ENCODE measurements at regions of chr11 and their contacts with region 1.

Region 1: GRCh38 chr11:114764563-114764962 is 86.2 kb downstream of the NXPE2 start:
- DNase-seq: no peak
- H3K4me3 ChIP-seq: no peak overlapping the region
- H3K4me3 Mint-ChIP-seq: no peak overlapping the region
- H3K27ac ChIP-seq: no peak overlapping the region
- H3K27ac Mint-ChIP-seq: no peak overlapping the region
- H3K4me1 ChIP-seq: no peaks in the 10 kb centered on the region
- H3K4me1 Mint-ChIP-seq: no peaks in the 10 kb centered on the region
- H3K27me3 ChIP-seq: no peaks in the 10 kb centered on the region
- H3K27me3 Mint-ChIP-seq: peaks cover 6 to 11% of the 10 kb centered on the region in 2 donors

Region 2: DNA sequence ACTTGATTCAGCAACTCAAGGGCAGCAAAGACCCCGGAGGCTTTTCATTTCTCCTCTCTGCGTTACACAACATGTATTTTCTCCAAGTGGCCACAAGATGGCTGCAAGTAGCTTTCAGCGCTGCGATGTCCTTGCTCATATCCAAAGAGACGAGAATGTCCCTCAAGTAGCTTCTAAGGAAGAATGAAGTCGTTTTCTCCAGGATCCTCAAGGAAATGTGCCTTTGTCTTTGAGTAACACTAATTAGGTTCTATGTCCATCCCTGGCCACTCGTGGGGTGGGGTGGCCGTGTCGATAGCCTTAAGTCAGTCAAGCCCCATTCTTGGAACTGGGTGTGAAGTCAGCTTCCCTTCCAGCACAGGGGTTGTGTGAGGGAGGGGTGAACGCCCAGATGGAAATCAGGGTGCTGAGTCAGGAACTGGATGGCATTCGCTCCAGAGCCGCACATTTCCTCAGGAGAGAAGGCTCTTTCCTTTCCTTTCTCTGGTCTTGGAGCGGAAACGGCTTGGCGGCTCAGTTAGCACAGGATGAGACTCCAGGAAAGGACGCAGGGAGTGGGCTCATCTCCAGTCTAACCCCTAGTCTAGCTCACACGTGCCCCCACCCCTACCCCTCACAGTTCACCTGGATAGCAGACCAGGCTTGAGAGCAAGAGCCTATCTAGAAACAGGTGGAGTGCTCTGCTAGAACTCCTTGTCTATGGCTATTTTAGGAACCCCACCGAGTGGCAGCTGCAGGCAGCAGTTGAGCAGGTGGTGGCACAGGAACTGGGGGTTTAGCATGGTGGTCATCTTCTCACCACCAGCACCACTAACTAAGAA is 424.0 kb before region 1 on chr11:
- CTCF ChIA-PET with region 1: interaction called, 5 read pairs
- POLR2A ChIA-PET with region 1: no interaction called
- intact Hi-C with region 1: loop called (anchors 1 kb)
- DNase-seq: peak; percentile 20 to 37 (median 32)
- H3K4me3 ChIP-seq: peak overlapping the region; percentile 1 to 3
- H3K4me3 Mint-ChIP-seq: peak overlapping the region; percentile 0 to 78 (median 56)
- H3K27ac ChIP-seq: no peak overlapping the region
- H3K27ac Mint-ChIP-seq: peak overlapping the region in 1 of 7 donors; percentile 5
- H3K4me1 ChIP-seq: peaks cover 11% of the 10 kb centered on the region
- H3K4me1 Mint-ChIP-seq: peaks cover 6 to 14% (median 8%) of the 10 kb centered on the region in 4 donors
- H3K27me3 ChIP-seq: no peaks in the 10 kb centered on the region
- H3K27me3 Mint-ChIP-seq: peaks cover 0 to 1% of the 10 kb centered on the region in 2 donors